SK-N-SH (cell line): ENCODE measurements at regions of chr7 and their contacts with region 1.

Region 1: DNA sequence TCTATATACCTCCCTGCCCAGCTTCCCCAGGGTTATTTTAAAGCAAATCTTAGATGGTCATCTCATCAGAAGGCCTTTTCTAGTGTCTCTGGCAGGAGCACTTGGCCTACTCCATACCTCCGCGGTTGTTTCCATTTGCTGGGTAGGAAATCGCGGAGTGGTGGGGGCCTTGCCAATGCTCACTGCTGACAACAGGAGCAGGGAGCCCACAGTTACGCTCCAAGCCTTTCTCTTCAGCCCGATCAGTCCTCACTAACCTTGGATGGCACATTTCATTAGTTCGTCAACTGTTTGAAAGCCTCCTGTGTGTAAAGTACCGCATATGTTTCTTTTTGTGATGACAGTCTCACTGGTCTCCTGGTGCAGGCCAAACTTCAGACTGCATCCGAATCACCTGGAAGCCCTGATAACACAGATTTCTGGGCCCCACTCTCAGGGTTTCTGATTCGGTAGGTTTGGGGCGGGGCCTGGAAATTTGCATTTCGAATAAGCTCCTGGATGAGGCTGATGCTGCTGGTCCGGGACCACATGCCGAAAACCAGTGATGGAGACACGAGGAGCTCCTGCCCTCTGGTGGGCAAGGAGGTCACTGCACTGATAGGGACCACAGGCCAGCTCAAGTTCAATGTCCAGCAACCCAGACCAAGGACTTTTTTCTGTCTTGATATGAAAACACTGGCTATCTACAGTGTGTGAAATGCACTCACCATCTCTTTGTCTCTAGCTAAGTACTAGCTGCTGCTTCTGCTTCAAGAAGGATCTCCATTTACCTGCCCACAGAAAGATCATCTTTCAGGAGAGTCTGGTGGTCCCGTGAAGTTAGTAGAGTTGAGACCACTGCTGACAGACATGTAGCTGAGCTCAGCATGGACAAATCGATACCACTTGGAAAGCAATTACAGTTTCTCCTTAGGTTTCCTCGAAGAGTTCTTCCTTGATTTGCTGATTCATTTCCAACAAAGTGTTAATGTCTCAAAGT is 14.0 kb downstream of the LRGUK start:
- DNase-seq: peak; percentile 86
- H3K4me3 ChIP-seq: no peak overlapping the region
- H3K27ac ChIP-seq: peak overlapping the region in 1 of 2 experiments; percentile 63; a peak in 2 of 4 replicates
- H3K4me1 ChIP-seq: peaks cover 0 to 20% of the 10 kb centered on the region in 2 experiments; a peak in 2 of 4 replicates
- H3K27me3 ChIP-seq: no peaks in the 10 kb centered on the region
- CTCF ChIP-seq: peak; percentile 98
- EP300 ChIP-seq: peak in 1 of 2 experiments; percentile 49; a peak in 1 of 4 replicates
- RAD21 ChIP-seq: peak; percentile 98

Region 2: GRCh38 chr7:133623721-133624120 is 517.5 kb before region 1 on chr7:
- CTCF ChIA-PET with region 1: no interaction called
- POLR2A ChIA-PET with region 1: no interaction called
- DNase-seq: no peak
- H3K4me3 ChIP-seq: no peak overlapping the region
- H3K27ac ChIP-seq: no peak overlapping the region
- H3K4me1 ChIP-seq: peaks cover 0 to 14% of the 10 kb centered on the region in 2 experiments; a peak in 2 of 4 replicates
- H3K27me3 ChIP-seq: no peaks in the 10 kb centered on the region
- CTCF ChIP-seq: no peak
- EP300 ChIP-seq: no peak
- RAD21 ChIP-seq: no peak

Region 3: DNA sequence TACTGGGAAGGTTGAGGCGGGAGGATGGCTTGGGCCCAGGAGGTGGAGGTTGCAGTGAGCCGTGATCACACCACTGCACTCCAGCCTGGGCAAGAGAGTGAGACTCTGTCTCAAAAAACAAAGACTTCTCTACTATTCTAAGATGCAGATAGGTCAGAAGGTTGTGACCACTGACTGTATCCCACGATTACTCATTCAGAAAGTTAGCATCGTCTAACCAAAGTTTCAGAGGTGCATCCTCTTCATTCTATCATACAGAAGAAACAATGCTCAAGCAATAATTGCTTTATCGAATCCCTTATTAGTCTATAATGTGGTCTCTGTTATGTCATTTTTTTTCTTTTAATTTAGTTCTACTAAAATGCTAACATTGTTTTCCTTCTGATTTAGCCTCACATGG is 362.7 kb before region 1 on chr7:
- CTCF ChIA-PET with region 1: interaction called, 20 read pairs
- POLR2A ChIA-PET with region 1: no interaction called
- DNase-seq: no peak
- H3K4me3 ChIP-seq: no peak overlapping the region
- H3K27ac ChIP-seq: peak overlapping the region in 1 of 2 experiments; percentile 100; a peak in 2 of 4 replicates
- H3K4me1 ChIP-seq: peaks cover 0 to 58% of the 10 kb centered on the region in 2 experiments; a peak in 2 of 4 replicates
- H3K27me3 ChIP-seq: no peaks in the 10 kb centered on the region
- CTCF ChIP-seq: no peak
- EP300 ChIP-seq: no peak
- RAD21 ChIP-seq: no peak

Region 4: GRCh38 chr7:134031835-134032617 is 109.2 kb before region 1 on chr7:
- CTCF ChIA-PET with region 1: interaction called, 10 read pairs
- POLR2A ChIA-PET with region 1: no interaction called
- DNase-seq: no peak
- H3K4me3 ChIP-seq: no peak overlapping the region
- H3K27ac ChIP-seq: peak overlapping the region in 1 of 2 experiments; percentile 53; a peak in 1 of 4 replicates
- H3K4me1 ChIP-seq: peaks cover 0 to 5% of the 10 kb centered on the region in 2 experiments; a peak in 2 of 4 replicates
- H3K27me3 ChIP-seq: no peaks in the 10 kb centered on the region
- CTCF ChIP-seq: peak; percentile 31
- EP300 ChIP-seq: no peak
- RAD21 ChIP-seq: peak; percentile 62

Region 5: DNA sequence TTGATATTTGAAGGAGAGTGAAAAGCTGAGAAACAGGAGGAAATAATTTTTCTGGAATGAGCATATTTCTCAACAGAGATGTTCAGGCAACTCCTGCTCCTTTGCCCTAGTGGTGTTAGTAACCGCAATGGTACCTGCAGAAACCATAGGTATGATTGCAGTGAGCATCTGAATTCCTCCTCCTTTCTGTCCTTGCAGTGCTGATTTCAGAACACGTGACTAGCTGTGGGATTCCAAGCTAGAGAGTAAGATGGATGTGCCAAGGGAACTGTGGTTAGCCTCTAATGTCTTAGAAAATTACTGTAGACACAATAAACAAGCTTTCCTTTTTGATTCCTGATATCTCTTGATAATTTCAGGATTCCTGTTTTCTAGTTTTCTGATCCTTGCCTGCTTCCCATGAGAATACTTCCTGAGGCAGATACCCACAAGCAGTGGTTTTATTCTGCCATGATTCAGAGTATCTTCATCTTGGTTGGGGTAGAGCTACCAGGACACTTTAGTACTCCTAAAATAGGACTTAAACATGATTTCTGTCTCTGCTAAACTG is 13.5 kb after region 1 on chr7:
- CTCF ChIA-PET with region 1: interaction called, 26 read pairs
- POLR2A ChIA-PET with region 1: no interaction called
- DNase-seq: no peak
- H3K4me3 ChIP-seq: no peak overlapping the region
- H3K27ac ChIP-seq: no peak overlapping the region
- H3K4me1 ChIP-seq: no peaks in the 10 kb centered on the region; a peak in 1 of 4 replicates
- H3K27me3 ChIP-seq: no peaks in the 10 kb centered on the region
- CTCF ChIP-seq: no peak
- EP300 ChIP-seq: no peak
- RAD21 ChIP-seq: no peak

Region 6: DNA sequence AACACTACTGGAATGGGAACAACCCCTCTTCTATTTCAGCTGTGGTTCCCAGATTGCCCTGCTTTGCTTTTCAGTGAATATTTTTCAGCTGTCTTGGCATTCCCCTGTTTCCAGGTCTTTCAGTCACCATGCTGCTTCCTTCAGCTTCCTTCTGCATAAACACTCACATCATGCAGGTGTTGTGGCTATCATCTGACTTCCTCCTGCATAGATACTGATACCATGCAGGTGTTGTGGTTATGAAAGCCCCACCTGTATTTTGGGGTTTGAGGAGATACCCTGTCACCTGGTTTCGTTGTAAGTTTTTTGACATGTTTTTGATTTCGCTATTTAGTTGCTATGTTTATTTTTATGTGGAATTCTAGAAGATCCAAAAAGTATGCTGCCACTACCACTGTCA is 104.1 kb after region 1 on chr7:
- CTCF ChIA-PET with region 1: no interaction called
- POLR2A ChIA-PET with region 1: no interaction called
- DNase-seq: no peak
- H3K4me3 ChIP-seq: no peak overlapping the region
- H3K27ac ChIP-seq: no peak overlapping the region
- H3K4me1 ChIP-seq: peaks cover 0 to 11% of the 10 kb centered on the region in 2 experiments; a peak in 1 of 4 replicates
- H3K27me3 ChIP-seq: no peaks in the 10 kb centered on the region
- CTCF ChIP-seq: no peak
- EP300 ChIP-seq: no peak
- RAD21 ChIP-seq: no peak

Region 7: DNA sequence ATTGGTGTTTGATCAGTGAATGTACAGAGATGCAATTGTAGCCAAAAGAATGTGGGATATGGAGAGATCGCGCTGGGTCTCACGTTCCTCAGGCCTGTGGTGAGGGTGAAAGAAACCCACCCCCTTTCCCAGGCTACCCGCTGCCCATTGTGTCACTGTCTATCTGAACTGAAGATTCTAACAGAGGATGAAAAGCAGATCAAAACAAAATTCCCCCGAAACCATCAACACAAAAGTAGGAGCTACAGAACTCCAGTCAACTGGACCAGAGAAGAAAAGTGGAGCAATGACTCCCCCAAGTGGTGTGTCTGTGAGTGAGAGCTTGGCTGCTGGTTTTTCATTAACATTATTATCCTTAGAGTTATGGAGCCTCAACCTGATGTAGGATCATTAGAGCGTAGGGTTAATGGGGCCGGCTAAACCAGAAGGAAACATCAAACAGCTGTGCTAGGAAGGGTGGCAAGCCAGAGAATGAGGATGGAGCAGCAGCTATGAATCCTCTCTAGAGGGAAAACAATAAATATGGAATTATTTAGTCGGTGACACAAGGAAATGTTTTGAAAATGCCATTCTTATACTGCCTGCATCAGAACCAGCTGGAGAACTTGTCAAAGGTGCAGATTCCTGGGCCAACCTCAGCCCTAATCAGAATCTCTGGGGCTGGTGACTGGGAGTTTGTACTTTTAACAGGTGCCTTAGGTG is 279.4 kb after region 1 on chr7:
- CTCF ChIA-PET with region 1: interaction called, 12 read pairs
- POLR2A ChIA-PET with region 1: no interaction called
- DNase-seq: peak; percentile 77
- H3K4me3 ChIP-seq: peak overlapping the region in 1 of 2 experiments; percentile 19; a peak in 1 of 4 replicates
- H3K27ac ChIP-seq: peak overlapping the region in 1 of 2 experiments; percentile 30; a peak in 2 of 4 replicates
- H3K4me1 ChIP-seq: peaks cover 0 to 7% of the 10 kb centered on the region in 2 experiments; a peak in 1 of 4 replicates
- H3K27me3 ChIP-seq: no peaks in the 10 kb centered on the region
- CTCF ChIP-seq: peak; percentile 86
- EP300 ChIP-seq: peak in 1 of 2 experiments; percentile 47; a peak in 2 of 4 replicates
- RAD21 ChIP-seq: peak; percentile 95